Sigmoid colon (tissue), 7 donors: ENCODE measurements at regions of chr15 and their contacts with region 1.

Region 1: DNA sequence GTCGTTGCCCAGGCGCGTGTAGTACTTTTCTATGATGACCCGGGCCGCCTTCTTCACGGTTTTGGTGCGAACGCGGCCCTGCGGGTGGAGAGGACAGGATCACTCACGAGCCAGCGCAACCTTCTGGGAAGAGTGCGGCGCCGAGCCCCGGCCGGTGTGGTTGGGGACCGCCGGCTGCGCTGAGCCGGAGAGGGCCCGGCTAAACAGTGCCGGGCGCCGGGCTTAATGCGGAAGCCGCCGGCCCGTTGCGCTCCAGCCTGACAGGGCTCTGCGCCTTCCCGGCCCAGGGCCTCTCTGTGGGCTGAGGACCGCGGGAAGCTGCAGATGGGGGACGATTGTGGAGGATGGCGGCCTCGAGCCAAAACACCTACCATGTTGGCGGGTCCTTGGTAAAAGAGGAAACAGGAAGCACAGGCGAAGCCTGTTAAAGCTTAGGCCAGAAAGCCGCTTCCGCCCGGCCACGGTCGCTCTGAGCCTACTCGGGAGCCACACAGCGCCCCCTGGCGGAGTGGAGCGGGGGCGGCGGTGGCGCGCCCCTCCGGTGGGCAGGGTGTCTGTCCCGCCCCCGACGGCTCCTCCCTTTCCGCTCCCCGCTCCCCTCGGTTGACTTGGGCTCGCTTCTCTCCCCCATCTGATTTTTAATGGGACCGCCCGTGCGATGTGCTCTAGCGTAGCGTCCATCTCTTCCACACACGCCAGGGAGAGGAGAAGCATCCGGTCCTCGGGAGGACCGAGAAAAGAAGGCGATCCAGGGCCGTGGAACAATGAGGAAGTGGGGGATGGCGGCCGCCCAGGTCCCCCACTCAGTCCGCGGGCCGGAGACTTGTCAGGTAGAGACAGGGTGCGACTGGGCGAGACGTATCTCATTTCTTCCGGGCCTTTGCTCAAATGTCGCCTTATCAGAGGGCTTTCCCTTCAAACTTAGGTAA is at the start of gene RPS17:
- DNase-seq: peak; percentile 98
- H3K4me3 ChIP-seq: peak within 1 kb of the TSS; percentile 64 to 77 (median 72)
- H3K27ac ChIP-seq: peak within 1 kb of the TSS; percentile 85 to 93 (median 92)
- H3K4me1 ChIP-seq: peaks cover 0 to 30% (median 20%) of the 10 kb centered on the region in 4 donors
- H3K27me3 ChIP-seq: no peaks in the 10 kb centered on the region
- CTCF ChIP-seq: peak; percentile 96 to 99 (median 97)
- EP300 ChIP-seq: peak in 1 of 4 donors; percentile 3
- POLR2A ChIP-seq: peak; percentile 73 to 79
- total RNA-seq, gene RPS17: 1,463 to 4,003 (median 3,231) TPM

Region 2: DNA sequence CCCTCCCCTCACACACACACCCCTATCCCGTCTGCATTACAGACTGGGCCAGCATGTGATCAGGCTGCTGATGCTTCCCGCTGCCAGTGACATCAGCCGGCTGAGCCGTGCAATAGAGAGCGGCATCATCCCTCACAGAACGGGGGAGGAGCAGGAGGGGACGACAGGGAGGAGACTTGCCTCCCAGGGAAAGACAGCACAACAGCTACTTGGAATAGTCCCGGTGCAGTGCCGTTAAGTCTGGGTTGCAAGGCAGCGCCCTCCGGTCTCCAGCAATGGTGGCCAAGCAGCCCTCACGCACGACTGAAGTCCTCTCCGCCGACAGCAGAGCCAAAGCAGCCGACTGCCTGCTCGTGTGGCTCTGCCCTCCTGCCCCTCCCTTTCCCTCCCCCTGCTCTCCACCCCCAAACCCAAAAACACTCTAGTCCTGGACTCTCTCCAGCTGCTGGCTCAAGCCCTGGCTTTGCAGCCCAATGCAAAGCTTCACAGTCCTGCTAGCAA is 31.5 kb after region 1 on chr15:
- intact Hi-C with region 1: loop called (anchors 5 kb)
- DNase-seq: peak; percentile 92
- H3K4me3 ChIP-seq: peak overlapping the region; percentile 35 to 54 (median 48)
- H3K27ac ChIP-seq: peak overlapping the region; percentile 75 to 81 (median 77)
- H3K4me1 ChIP-seq: peaks cover 0 to 21% (median 15%) of the 10 kb centered on the region in 4 donors
- H3K27me3 ChIP-seq: no peaks in the 10 kb centered on the region
- CTCF ChIP-seq: no peak
- EP300 ChIP-seq: peak in 1 of 4 donors; percentile 41
- POLR2A ChIP-seq: peak in 1 of 2 donors; percentile 6

Region 3: GRCh38 chr15:82597815-82598214 is 57.5 kb after region 1 on chr15:
- intact Hi-C with region 1: no loop called
- DNase-seq: no peak
- H3K4me3 ChIP-seq: no peak overlapping the region
- H3K27ac ChIP-seq: no peak overlapping the region
- H3K4me1 ChIP-seq: no peaks in the 10 kb centered on the region
- H3K27me3 ChIP-seq: no peaks in the 10 kb centered on the region
- CTCF ChIP-seq: no peak
- EP300 ChIP-seq: no peak
- POLR2A ChIP-seq: no peak

Region 4: DNA sequence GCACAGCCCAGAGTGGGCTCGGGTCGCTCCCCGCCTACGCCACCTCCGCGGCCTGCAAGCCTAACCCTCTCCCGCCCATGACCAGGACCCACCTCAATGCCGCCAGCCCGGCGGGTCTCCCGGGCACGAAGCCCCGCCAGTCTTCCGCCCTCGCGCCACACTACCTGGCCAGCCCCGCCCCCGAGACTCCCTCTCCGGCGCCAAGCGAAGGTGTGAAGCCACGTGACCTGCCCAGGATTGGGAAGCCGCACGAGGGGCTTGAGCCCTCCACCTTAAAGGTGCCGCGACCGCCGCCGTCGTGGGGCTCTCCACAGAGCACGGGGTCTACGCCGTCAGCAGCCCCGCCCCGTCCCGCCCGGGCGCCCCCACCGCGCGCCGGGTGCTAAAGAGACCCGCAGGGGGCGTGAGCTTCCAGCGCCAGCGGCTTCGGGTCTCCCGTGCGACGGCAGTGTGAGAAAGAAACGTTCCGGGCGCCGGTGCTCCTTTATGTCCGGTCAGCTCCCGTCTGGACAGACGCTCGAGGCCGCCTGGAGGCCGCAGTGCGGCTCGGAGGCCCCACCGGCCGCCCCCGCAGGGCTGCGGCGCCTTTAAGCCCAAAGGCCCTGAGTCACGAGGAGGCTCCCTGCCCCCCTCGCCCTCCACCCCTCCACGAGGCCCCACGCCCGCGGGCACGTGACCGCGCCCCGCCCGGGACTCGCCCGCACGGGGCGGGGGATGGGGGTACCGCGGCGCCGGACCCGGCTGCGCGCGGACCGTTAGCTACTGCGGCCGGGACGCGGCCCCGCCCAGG is 106.9 kb after region 1 on chr15 and contains the start of gene CPEB1:
- intact Hi-C with region 1: loop called (anchors 1 kb)
- DNase-seq: peak; percentile 88
- H3K4me3 ChIP-seq: peak within 1 kb of the TSS; percentile 30 to 62 (median 58)
- H3K27ac ChIP-seq: peak within 1 kb of the TSS; percentile 51 to 63 (median 54)
- H3K4me1 ChIP-seq: peaks cover 0 to 28% (median 27%) of the 10 kb centered on the region in 4 donors
- H3K27me3 ChIP-seq: peaks cover 0 to 27% (median 0%) of the 10 kb centered on the region in 3 donors
- CTCF ChIP-seq: no peak
- EP300 ChIP-seq: no peak
- POLR2A ChIP-seq: no peak
- total RNA-seq, gene CPEB1: 8.3 to 13.2 (median 12.1) TPM

Region 5: DNA sequence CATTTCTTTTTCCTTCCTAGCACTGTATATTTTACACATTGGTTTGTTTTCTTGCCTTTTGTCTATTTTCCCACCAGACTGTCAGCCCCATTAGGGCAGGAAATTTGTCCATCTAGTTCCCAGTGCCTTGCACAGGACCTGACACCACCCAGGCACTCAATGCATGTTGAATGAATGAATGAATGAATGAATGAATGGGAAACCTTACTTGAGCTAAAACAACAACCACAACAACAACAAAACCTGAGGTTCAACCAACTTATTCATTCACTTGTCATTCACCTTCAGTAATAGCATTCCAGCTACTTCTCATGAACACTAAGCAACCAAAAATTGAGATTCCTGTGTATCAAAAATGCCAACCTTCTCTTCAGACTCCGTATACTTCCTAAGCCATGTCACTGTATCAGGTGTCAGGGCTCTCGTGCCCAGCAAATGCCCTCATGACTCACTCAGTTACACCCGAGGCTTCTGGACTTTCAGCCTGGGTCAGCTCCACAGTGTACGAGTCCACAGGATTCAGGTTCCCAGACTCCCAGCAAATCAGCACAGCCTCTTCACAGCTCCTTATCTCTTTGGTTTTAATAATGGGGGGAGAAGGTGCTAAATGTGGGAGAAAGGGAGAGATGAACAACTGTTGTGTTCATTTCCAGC is 228.2 kb after region 1 on chr15:
- intact Hi-C with region 1: no loop called
- DNase-seq: no peak
- H3K4me3 ChIP-seq: no peak overlapping the region
- H3K27ac ChIP-seq: no peak overlapping the region
- H3K4me1 ChIP-seq: no peaks in the 10 kb centered on the region
- H3K27me3 ChIP-seq: no peaks in the 10 kb centered on the region
- CTCF ChIP-seq: no peak
- EP300 ChIP-seq: no peak
- POLR2A ChIP-seq: no peak

Region 6: GRCh38 chr15:82809404-82810060 is 269.2 kb after region 1 on chr15 and contains the start of gene WHAMM:
- intact Hi-C with region 1: loop called (anchors 5 kb)
- DNase-seq: peak; percentile 100
- H3K4me3 ChIP-seq: peak within 1 kb of the TSS; percentile 71 to 96 (median 82)
- H3K27ac ChIP-seq: peak within 1 kb of the TSS; percentile 96 to 100 (median 98)
- H3K4me1 ChIP-seq: peaks cover 0 to 25% (median 19%) of the 10 kb centered on the region in 4 donors
- H3K27me3 ChIP-seq: no peaks in the 10 kb centered on the region
- CTCF ChIP-seq: no peak
- EP300 ChIP-seq: peak in 1 of 4 donors; percentile 16
- POLR2A ChIP-seq: peak; percentile 91 to 92
- total RNA-seq, gene WHAMM: 7.6 to 10.5 (median 9.0) TPM